ENCODE measurements at regions of chr3 and their contacts with region 1.

Region 1: GRCh38 chr3:156727519-156728205 is 53.3 kb downstream of the TIPARP start:
- DNase-seq: no peak
- CTCF ChIP-seq: no peak

Region 2: GRCh38 chr3:156741935-156742334 is 14.3 kb after region 1 on chr3:
- CTCF ChIA-PET with region 1: interaction called, 12 read pairs
- POLR2A ChIA-PET with region 1: no interaction called
- DNase-seq: no peak
- CTCF ChIP-seq: no peak

Region 3: DNA sequence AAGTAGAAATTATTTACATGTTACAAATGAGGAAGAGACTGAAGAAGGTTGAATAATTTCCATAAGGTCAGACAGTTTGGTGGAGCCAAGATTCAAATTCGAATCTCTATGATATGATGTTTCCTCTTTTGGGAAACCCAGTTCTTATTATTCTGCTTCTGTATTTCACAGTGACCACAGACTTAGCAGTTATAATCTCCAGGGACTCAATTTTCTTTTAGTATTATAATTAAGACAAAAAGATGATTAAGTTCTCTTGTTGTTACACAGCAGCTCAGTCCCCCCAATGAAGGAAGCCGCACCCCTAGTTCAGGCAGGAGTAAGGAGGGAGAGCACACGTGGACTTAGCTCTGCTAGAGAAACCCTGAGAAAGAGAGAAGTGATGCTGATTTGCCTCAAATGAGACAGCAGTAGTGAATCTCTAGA is 301.7 kb after region 1 on chr3:
- CTCF ChIA-PET with region 1: no interaction called
- POLR2A ChIA-PET with region 1: no interaction called
- DNase-seq: no peak
- CTCF ChIP-seq: no peak

Measured in GM10248 (cell line).